Left ventricle myocardium superior (tissue), 1 donor: ENCODE measurements at regions of chr1 and their contacts with region 1.

Region 1: DNA sequence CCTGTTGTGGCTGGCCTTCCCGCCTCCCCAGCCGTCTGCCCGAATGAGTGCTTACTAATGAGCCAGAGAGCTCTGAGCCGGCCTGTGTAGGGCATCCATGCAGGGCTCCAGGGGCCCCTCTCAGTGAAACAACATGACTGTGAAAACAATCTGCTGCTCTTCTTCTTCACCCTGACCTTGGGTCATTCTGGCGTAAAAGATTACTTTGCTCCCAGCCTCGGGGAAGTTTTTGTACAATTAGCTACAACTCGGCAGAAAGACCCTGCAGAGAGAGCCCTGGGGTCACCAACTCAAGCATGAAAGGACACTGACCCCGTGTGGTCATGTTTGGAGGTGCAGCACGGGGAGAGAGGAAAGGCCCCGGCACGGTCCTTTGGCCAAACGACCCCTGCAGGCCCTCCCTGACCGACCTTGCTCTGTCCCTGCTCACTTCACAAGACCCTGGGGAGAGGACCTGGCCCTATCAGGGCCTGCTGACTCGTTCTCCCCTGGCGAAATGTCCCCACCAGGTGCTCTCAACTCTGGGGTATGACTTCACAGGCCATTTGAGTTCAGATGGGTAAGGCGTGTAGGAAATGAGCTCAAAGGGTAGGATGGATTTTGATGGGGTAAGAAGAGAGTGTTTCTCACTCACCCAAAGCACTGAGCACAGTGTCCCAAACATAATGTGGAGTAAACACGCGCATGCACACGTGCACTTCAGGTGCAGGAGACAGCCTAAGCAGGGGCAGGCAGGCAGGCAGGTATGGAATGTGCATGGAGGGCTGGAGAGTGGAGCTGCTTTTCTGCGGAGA is 22.9 kb upstream of the FAM20B start:
- DNase-seq: peak; percentile 86
- ATAC-seq: peak; percentile 90

Region 2: GRCh38 chr1:178532392-178532791 is 470.4 kb before region 1 on chr1:
- intact Hi-C with region 1: loop called (anchors 10 kb)
- DNase-seq: peak; percentile 91
- ATAC-seq: peak; percentile 46

Region 3: GRCh38 chr1:178774263-178774662 is 228.5 kb before region 1 on chr1:
- intact Hi-C with region 1: loop called (anchors 5 kb)
- DNase-seq: no peak
- ATAC-seq: no peak

Region 4: GRCh38 chr1:178818416-178818815 is 184.3 kb before region 1 on chr1:
- intact Hi-C with region 1: loop called (anchors 10 kb)
- DNase-seq: no peak
- ATAC-seq: no peak

Region 5: GRCh38 chr1:178953034-178953433 is 49.7 kb before region 1 on chr1:
- intact Hi-C with region 1: no loop called
- DNase-seq: peak; percentile 46
- ATAC-seq: peak; percentile 90